WTC11 (cell line): ENCODE measurements at regions of chr12 and their contacts with region 1.

Region 1: DNA sequence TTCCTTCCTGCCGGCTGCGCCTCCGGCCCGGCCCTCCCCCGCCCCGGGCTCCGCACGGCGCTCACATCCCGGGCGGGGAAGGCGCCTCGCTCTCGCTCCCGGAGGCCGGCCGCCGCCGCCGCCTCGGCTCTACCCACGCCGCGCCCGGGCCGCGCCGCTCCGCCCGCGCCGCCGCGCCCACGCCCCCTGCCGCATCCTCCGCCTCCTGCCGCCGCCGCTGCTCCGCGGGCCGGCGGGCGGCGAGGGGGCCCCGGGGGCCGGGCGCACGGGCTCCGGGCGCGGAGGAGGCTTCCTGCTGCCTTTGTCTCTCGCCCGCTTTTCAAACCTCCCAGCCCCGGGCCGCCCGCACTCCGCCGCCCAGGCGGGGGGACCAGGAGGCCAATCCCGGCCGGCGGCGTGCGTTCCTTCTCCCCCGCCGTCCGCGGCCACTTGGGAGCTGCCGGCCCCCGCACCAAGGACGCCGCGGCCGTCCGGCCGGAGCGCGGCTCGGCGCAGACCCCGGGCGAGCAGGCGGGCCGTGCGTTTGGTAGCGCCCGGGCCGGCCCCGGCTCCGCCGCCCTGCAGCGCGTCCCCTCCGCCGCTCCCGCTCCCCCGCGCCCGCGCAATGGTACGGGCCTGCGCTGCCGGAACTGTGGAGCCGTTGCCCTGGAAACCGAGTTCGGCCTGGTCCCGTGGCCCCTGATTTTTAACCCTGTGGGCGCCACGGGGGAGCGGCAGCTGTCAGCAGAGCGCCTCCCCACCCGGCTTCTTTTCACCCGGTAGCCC is at the start of gene FBXL14:
- DNase-seq: peak; percentile 91
- ATAC-seq: peak; percentile 58
- H3K4me3 Mint-ChIP-seq: peak within 1 kb of the TSS; percentile 86
- H3K27ac Mint-ChIP-seq: no peak within 1 kb of the TSS
- H3K4me1 Mint-ChIP-seq: peaks cover 49% of the 10 kb centered on the region
- H3K27me3 Mint-ChIP-seq: peaks cover 55% of the 10 kb centered on the region
- CTCF ChIP-seq: no peak
- total RNA-seq, gene FBXL14: 12.0 to 14.6 TPM (median 12.9 TPM) in 3 replicates

Region 2: GRCh38 chr12:1583421-1584078 is 10.9 kb before region 1 on chr12:
- CTCF ChIA-PET with region 1: interaction called, 10 read pairs
- POLR2A ChIA-PET with region 1: interaction called, 3 read pairs
- DNase-seq: peak; percentile 70
- ATAC-seq: peak; percentile 65
- H3K4me3 Mint-ChIP-seq: no peak overlapping the region
- H3K27ac Mint-ChIP-seq: no peak overlapping the region
- H3K4me1 Mint-ChIP-seq: peaks cover 24% of the 10 kb centered on the region
- H3K27me3 Mint-ChIP-seq: peaks cover 56% of the 10 kb centered on the region
- CTCF ChIP-seq: peak; percentile 73

Region 3: GRCh38 chr12:1605129-1606020 is 10.9 kb after region 1 on chr12:
- CTCF ChIA-PET with region 1: interaction called, 15 read pairs
- POLR2A ChIA-PET with region 1: no interaction called
- DNase-seq: peak; percentile 48
- ATAC-seq: peak; percentile 77
- H3K4me3 Mint-ChIP-seq: peak overlapping the region; percentile 75
- H3K27ac Mint-ChIP-seq: no peak overlapping the region
- H3K4me1 Mint-ChIP-seq: peaks cover 14% of the 10 kb centered on the region
- H3K27me3 Mint-ChIP-seq: peaks cover 38% of the 10 kb centered on the region
- CTCF ChIP-seq: peak; percentile 41; the same call in 1 of the 2 replicates